ENCODE measurements at regions of chr1 and their contacts with region 1.

Region 1: GRCh38 chr1:224513787-224514209 is 79.2 kb upstream of the WDR26 start:
- DNase-seq: no peak
- H3K4me3 ChIP-seq: no peak overlapping the region
- H3K27me3 ChIP-seq: no peaks in the 10 kb centered on the region
- CTCF ChIP-seq: peak; percentile 90

Region 2: GRCh38 chr1:224420106-224420505 is 93.7 kb before region 1 on chr1:
- CTCF ChIA-PET with region 1: no interaction called
- POLR2A ChIA-PET with region 1: no interaction called
- DNase-seq: no peak
- H3K4me3 ChIP-seq: no peak overlapping the region
- H3K27me3 ChIP-seq: no peaks in the 10 kb centered on the region
- CTCF ChIP-seq: no peak

Region 3: DNA sequence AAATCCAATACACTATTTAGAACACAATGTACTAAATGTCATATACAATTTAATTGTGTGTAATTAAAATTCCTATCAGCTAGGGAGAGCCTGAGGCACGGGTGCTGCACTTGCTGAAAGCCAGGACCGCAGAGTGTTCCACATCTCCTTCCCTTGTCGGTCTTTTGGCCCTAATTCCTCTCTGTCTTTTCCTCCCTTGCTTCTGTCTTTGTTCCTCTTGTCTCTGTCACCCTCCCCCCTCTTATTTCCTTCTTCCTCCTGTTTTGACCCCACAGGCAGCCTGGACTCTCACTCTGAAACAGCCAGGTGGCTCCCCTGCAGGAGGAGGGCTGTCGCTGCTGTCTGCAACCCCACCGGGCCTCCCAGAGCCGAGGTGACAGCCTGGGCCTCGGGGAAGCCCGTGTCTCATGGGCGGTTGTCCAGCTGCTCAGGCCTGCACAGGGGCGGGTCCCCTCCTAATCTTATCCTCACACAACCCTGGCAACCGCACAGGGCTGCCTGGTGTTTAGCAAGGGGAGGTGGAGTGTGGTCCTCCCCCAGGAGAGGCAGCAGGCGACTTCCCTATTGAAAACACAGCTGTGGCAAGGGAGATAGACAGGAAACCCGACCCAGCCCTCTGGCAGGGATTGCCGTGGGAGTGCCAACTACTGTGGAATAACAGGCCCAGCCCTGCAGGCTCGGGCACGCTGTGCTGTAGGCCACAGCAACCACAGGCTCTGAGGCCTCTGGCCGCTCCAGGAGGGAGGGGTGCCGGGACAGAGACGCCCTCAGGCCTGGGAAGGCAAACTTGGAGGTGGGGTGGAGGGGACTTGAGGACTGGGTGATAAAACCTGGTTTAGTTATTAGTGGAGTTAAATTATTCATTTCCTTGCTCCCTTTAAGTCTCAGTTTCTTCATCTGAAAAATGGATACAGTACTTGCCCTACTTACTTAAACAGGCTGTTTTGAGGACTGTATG is 10.4 kb before region 1 on chr1:
- CTCF ChIA-PET with region 1: interaction called, 14 read pairs
- POLR2A ChIA-PET with region 1: no interaction called
- DNase-seq: peak; percentile 66
- H3K4me3 ChIP-seq: no peak overlapping the region
- H3K27me3 ChIP-seq: no peaks in the 10 kb centered on the region
- CTCF ChIP-seq: peak; percentile 26; the same call in 1 of the 2 replicates

Region 4: GRCh38 chr1:224565186-224565585 is 51.4 kb after region 1 on chr1:
- CTCF ChIA-PET with region 1: no interaction called
- POLR2A ChIA-PET with region 1: no interaction called
- DNase-seq: peak; percentile 62
- H3K4me3 ChIP-seq: no peak overlapping the region
- H3K27me3 ChIP-seq: no peaks in the 10 kb centered on the region
- CTCF ChIP-seq: no peak

Region 5: DNA sequence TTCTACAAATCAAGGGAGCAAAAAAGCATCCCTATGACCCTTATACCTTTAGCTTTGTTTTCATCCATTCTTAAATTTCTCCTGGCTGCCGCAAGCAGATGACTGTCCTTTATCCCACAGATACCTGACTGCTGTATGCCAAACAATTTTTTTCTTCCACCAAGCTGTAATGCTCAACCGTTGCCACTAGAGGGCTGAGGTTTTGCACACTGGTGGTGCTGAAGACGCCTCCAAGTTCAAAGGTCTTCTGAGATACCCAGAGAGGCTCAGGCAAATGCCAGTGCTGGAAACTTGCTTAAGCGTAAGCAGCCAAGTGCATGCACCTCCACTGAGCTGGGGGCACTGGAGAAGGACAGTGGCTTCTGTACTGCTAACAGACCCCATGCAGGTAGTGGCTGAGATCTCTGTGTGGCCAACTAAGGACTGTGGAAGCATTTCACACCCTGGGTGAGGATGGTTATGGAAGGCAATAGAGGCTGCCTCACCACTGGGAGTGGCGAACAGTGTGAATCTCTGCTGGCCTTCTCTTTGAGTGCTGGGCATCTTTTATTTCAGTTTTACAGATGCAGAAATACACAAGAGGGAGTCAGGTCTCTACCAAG is 130.9 kb after region 1 on chr1:
- CTCF ChIA-PET with region 1: interaction called, 40 read pairs
- POLR2A ChIA-PET with region 1: no interaction called
- DNase-seq: no peak
- H3K4me3 ChIP-seq: no peak overlapping the region
- H3K27me3 ChIP-seq: no peaks in the 10 kb centered on the region
- CTCF ChIP-seq: peak; percentile 94

Region 6: GRCh38 chr1:224863970-224864369 is 350.2 kb after region 1 on chr1:
- CTCF ChIA-PET with region 1: interaction called, 15 read pairs
- POLR2A ChIA-PET with region 1: interaction called, 3 read pairs
- DNase-seq: no peak
- H3K4me3 ChIP-seq: no peak overlapping the region
- H3K27me3 ChIP-seq: no peaks in the 10 kb centered on the region
- CTCF ChIP-seq: no peak

Region 7: GRCh38 chr1:224922404-224923164 is 408.8 kb after region 1 on chr1:
- CTCF ChIA-PET with region 1: interaction called, 34 read pairs
- POLR2A ChIA-PET with region 1: no interaction called
- DNase-seq: no peak
- H3K4me3 ChIP-seq: no peak overlapping the region
- H3K27me3 ChIP-seq: no peaks in the 10 kb centered on the region
- CTCF ChIP-seq: peak; percentile 72

Measured in BJ (cell line).